CD14-positive monocyte (primary cell): ENCODE measurements at regions of chr3 and their contacts with region 1.

Region 1: GRCh38 chr3:172332256-172333041 is 115.8 kb downstream of the GHSR start:
- DNase-seq: peak; percentile 26 to 53 (median 48)
- H3K4me3 ChIP-seq: no peak overlapping the region
- H3K4me3 Mint-ChIP-seq: no peak overlapping the region
- H3K27ac ChIP-seq: peak overlapping the region in 1 of 2 donors; percentile 29
- H3K27ac Mint-ChIP-seq: peak overlapping the region in 2 of 7 donors; percentile 18 to 80
- H3K4me1 ChIP-seq: no peaks in the 10 kb centered on the region
- H3K4me1 Mint-ChIP-seq: no peaks in the 10 kb centered on the region
- H3K27me3 ChIP-seq: no peaks in the 10 kb centered on the region
- H3K27me3 Mint-ChIP-seq: no peaks in the 10 kb centered on the region
- CTCF ChIP-seq: peak; percentile 97

Region 2: DNA sequence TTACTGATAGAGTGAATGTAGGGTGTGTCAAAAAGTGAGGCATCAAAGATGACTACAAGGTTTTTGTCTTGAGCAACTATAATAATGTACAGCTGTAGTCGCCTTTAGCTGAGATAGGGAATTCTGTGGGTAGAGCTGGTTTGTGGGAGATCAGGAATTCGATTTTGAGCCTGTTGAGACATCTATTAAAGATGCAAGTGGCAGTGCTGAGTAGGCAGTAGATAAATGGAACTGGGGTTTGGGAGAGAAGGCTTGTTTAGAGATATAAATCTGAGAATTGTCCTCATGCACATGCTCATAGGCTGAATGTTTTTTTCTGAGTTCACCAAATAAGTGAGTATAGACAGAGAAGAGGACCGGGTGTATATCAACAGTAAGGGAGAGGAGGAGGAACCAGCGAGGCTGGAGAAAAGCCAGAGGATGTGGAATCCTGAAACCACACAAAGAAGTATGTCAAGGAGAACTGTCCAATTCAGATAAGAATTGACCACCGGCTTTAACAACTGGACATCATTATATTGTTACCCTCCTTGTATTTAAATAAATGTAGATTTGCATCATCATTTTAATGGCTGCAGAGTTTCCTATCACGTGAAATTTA is 726.2 kb before region 1 on chr3:
- intact Hi-C with region 1: no loop called
- DNase-seq: no peak
- H3K4me3 ChIP-seq: no peak overlapping the region
- H3K4me3 Mint-ChIP-seq: no peak overlapping the region
- H3K27ac ChIP-seq: no peak overlapping the region
- H3K27ac Mint-ChIP-seq: no peak overlapping the region
- H3K4me1 ChIP-seq: no peaks in the 10 kb centered on the region
- H3K4me1 Mint-ChIP-seq: no peaks in the 10 kb centered on the region
- H3K27me3 ChIP-seq: no peaks in the 10 kb centered on the region
- H3K27me3 Mint-ChIP-seq: no peaks in the 10 kb centered on the region
- CTCF ChIP-seq: no peak

Region 3: DNA sequence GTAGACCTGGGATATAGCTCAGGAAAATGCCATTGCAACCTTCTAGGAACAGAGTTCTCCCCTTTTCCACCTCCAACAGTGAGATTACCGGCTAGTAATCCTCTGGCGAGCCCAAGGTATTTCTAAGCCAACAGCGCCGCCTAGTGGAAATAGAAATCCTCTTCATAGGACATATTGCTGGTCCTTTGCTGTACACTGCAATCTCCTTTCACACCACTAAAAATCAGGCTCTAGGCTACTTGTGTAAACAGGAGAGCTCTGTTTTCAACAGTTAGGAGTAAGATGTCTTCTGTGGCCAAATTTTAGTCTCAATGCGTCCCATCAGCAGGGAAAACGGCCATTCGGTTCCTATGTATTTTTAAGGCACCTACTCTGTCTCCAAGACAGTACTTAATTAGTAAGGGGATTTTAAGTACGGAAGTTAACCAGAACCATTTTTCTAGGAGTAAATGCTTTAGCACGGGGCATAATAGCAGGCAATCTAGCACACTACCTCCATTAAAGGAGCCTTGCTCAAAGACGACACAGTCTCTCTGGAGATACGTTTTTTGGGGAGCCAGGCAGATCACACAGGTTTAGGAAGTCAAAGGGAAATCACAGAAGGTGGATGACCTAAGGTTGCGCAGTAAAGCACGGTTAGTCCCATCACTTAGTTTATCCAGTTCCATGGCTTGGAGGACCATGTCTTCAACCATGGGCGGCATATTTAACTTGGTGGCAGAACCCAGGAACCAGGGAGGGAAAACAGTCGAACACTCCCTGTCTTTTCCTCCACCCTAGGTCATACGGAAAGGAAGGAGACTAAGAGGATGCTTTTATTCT is 334.6 kb after region 1 on chr3:
- intact Hi-C with region 1: loop called (anchors 5 kb)
- DNase-seq: peak; percentile 71 to 85 (median 76)
- H3K4me3 ChIP-seq: peak overlapping the region in 1 of 3 experiments; percentile 40
- H3K4me3 Mint-ChIP-seq: peak overlapping the region; percentile 42 to 78
- H3K27ac ChIP-seq: peak overlapping the region in 1 of 2 donors; percentile 26
- H3K27ac Mint-ChIP-seq: peak overlapping the region in 3 of 7 donors; percentile 15 to 62 (median 60)
- H3K4me1 ChIP-seq: peaks cover 7 to 14% of the 10 kb centered on the region in 2 donors
- H3K4me1 Mint-ChIP-seq: peaks cover 15% of the 10 kb centered on the region
- H3K27me3 ChIP-seq: no peaks in the 10 kb centered on the region
- H3K27me3 Mint-ChIP-seq: no peaks in the 10 kb centered on the region
- CTCF ChIP-seq: peak; percentile 77